ENCODE measurements at regions of chr9 and their contacts with region 1.

Region 1: DNA sequence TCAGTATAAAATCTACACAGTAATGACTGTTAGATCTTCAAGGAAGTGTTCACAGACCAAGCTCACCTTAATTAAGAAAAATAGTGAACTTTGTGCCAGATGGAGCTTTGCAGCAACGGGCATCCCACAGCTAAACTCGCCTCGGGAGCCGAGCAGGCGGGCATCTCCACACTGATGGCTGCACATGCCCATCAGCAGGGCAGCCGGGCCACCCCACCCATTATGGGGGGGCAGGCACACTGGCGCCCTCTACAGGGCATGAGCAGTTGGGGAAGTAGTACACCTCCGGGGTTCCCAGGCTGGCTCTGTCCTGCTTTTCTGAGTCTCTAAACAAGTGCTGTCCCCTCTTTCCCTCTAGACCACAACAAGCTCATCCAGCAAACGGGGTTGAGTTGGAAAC is 21.6 kb downstream of the ANKS6 start:
- DNase-seq: peak; percentile 52
- H3K4me3 ChIP-seq: no peak overlapping the region
- H3K27ac ChIP-seq: no peak overlapping the region
- H3K4me1 ChIP-seq: no peaks in the 10 kb centered on the region
- H3K27me3 ChIP-seq: no peaks in the 10 kb centered on the region

Region 2: GRCh38 chr9:98315551-98316060 is 459.1 kb before region 1 on chr9:
- in situ Hi-C with region 1: loop called (anchors 5 kb)
- DNase-seq: peak; percentile 88
- H3K4me3 ChIP-seq: no peak overlapping the region
- H3K27ac ChIP-seq: no peak overlapping the region
- H3K4me1 ChIP-seq: peaks cover 35% of the 10 kb centered on the region
- H3K27me3 ChIP-seq: no peaks in the 10 kb centered on the region

Region 3: GRCh38 chr9:98838155-98838867 is 63.6 kb after region 1 on chr9:
- in situ Hi-C with region 1: no loop called
- DNase-seq: no peak
- H3K4me3 ChIP-seq: no peak overlapping the region
- H3K27ac ChIP-seq: no peak overlapping the region
- H3K4me1 ChIP-seq: no peaks in the 10 kb centered on the region
- H3K27me3 ChIP-seq: no peaks in the 10 kb centered on the region

Measured in GM23248 (cell line).